CD8-positive, alpha-beta T cell (primary cell): ENCODE measurements at regions of chr7 and their contacts with region 1.

Region 1: GRCh38 chr7:24896031-24896501 is 83.9 kb downstream of the OSBPL3 start:
- DNase-seq: peak in 2 of 9 experiments; percentile 37 to 54
- ATAC-seq: peak; percentile 56
- H3K4me3 ChIP-seq: no peak overlapping the region
- H3K4me3 Mint-ChIP-seq: no peak overlapping the region
- H3K27ac ChIP-seq: peak overlapping the region in 1 of 2 experiments; percentile 34
- H3K27ac Mint-ChIP-seq: peak overlapping the region; percentile 45
- H3K4me1 ChIP-seq: peaks cover 13% of the 10 kb centered on the region
- H3K4me1 Mint-ChIP-seq: peaks cover 45% of the 10 kb centered on the region
- H3K27me3 ChIP-seq: no peaks in the 10 kb centered on the region
- H3K27me3 Mint-ChIP-seq: no peaks in the 10 kb centered on the region
- CTCF ChIP-seq: no peak

Region 2: GRCh38 chr7:24158975-24159374 is 737.1 kb before region 1 on chr7:
- CTCF ChIA-PET with region 1: no interaction called
- POLR2A ChIA-PET with region 1: no interaction called
- intact Hi-C with region 1: no loop called
- DNase-seq: no peak
- ATAC-seq: no peak
- H3K4me3 ChIP-seq: no peak overlapping the region
- H3K4me3 Mint-ChIP-seq: no peak overlapping the region
- H3K27ac ChIP-seq: no peak overlapping the region
- H3K27ac Mint-ChIP-seq: no peak overlapping the region
- H3K4me1 ChIP-seq: no peaks in the 10 kb centered on the region
- H3K4me1 Mint-ChIP-seq: no peaks in the 10 kb centered on the region
- H3K27me3 ChIP-seq: no peaks in the 10 kb centered on the region
- H3K27me3 Mint-ChIP-seq: peaks cover 28% of the 10 kb centered on the region
- CTCF ChIP-seq: no peak

Region 3: DNA sequence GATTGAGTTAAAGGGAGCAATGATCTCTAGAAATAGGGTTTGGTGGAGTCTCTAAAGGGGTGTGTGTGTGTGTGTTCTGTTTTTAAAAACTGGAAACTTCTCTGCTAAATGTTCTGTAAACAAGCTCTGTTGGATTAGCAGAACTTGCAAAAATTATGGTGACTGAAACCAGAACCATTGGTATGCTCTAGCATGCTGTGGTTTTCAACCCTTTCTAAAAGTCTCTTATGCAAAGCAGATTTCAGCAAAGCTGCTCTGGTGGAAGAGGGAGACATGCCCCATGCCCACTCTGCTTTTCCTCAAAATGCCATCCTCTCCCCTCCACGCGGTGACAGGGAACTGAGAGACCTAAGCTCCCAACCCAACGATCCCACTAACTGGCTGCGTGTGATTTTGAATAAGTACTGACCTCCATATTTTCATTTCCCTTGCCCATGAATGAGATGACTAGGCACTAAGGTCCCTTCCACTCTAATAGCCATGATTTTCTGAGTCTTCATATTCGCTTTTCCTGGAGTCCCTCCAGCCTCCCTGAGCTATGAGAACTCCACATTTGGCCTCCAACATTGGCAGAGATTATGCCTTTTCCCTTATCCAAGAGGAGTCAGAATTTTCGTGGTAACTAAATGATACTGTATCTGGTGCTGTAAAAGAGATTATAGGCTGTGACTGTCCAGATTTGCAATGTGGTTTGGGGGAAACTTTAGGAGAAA is 440.1 kb before region 1 on chr7:
- CTCF ChIA-PET with region 1: no interaction called
- POLR2A ChIA-PET with region 1: no interaction called
- intact Hi-C with region 1: no loop called
- DNase-seq: no peak
- ATAC-seq: no peak
- H3K4me3 ChIP-seq: no peak overlapping the region
- H3K4me3 Mint-ChIP-seq: no peak overlapping the region
- H3K27ac ChIP-seq: no peak overlapping the region
- H3K27ac Mint-ChIP-seq: no peak overlapping the region
- H3K4me1 ChIP-seq: no peaks in the 10 kb centered on the region
- H3K4me1 Mint-ChIP-seq: no peaks in the 10 kb centered on the region
- H3K27me3 ChIP-seq: no peaks in the 10 kb centered on the region
- H3K27me3 Mint-ChIP-seq: peaks cover 13% of the 10 kb centered on the region
- CTCF ChIP-seq: no peak

Region 4: DNA sequence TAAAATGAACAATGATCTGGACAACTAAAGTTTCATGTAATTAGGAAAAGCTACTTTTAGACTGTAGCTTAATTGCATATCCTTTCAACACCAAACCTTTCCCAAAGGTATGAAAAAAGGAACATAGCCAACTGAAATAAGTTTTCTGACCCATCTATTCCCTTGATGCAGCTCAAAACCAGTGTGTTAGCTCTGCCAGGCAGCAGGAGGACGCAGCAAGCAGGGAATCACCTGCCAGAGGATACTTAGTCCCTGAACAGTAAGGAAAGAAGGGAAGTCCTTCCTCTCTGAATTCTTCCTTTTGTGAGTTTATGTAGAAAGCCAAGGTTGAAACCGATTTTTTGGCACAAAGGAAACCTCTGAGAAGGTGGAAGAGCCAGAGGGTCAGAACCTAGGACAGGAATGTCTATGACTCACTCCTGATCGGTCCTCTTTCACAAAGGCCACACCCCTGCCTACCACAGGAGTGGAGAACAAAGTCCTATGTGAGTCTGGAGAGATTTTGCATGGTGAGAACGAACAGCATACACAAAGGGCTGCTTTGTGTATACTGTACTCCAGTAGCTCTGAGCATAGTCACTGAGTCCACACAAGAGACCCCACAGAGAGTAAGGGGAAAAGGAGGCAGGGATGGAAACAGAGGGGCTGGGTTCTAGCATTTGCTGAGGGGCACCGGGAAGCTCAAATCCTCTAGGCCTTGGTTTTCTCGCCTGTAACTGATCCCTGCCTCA is 70.0 kb before region 1 on chr7:
- CTCF ChIA-PET with region 1: interaction called, 8 read pairs
- POLR2A ChIA-PET with region 1: no interaction called
- intact Hi-C with region 1: loop called in 1 of 2 experiments (anchors 5 kb)
- DNase-seq: peak in 4 of 9 experiments; percentile 8 to 36 (median 18)
- ATAC-seq: peak; percentile 1
- H3K4me3 ChIP-seq: peak overlapping the region in 1 of 2 experiments; percentile 3
- H3K4me3 Mint-ChIP-seq: peak overlapping the region; percentile 9
- H3K27ac ChIP-seq: peak overlapping the region in 1 of 2 experiments; percentile 27
- H3K27ac Mint-ChIP-seq: peak overlapping the region; percentile 94
- H3K4me1 ChIP-seq: peaks cover 39% of the 10 kb centered on the region
- H3K4me1 Mint-ChIP-seq: peaks cover 46% of the 10 kb centered on the region
- H3K27me3 ChIP-seq: no peaks in the 10 kb centered on the region
- H3K27me3 Mint-ChIP-seq: no peaks in the 10 kb centered on the region
- CTCF ChIP-seq: no peak

Region 5: DNA sequence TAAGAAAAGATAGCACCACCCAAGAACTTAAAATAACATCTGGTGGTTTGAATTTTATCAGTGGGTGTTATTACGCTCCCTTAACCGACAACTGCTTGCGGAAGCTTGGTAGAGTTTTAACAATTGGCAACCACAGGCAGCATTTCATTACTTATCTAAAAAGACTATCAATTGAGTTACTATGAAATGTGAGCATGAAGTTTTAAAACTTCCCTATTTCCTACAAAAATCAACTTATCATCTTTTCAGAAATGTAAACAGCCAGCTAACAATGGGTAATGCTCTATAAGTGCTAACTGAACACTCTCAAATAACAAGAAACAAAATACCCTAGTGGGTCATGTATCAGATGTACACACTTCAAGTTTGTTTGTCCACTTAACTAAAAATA is 15.1 kb after region 1 on chr7:
- CTCF ChIA-PET with region 1: interaction called, 4 read pairs
- POLR2A ChIA-PET with region 1: interaction called, 5 read pairs
- intact Hi-C with region 1: loop called in 1 of 2 experiments (anchors 2 kb)
- DNase-seq: peak in 4 of 9 experiments; percentile 32 to 75 (median 48)
- ATAC-seq: peak; percentile 65
- H3K4me3 ChIP-seq: no peak overlapping the region
- H3K4me3 Mint-ChIP-seq: peak overlapping the region; percentile 27
- H3K27ac ChIP-seq: peak overlapping the region in 1 of 2 experiments; percentile 70
- H3K27ac Mint-ChIP-seq: peak overlapping the region; percentile 76
- H3K4me1 ChIP-seq: peaks cover 68% of the 10 kb centered on the region
- H3K4me1 Mint-ChIP-seq: peaks cover 54% of the 10 kb centered on the region
- H3K27me3 ChIP-seq: no peaks in the 10 kb centered on the region
- H3K27me3 Mint-ChIP-seq: no peaks in the 10 kb centered on the region
- CTCF ChIP-seq: no peak

Region 6: GRCh38 chr7:24921362-24921679 is 25.3 kb after region 1 on chr7:
- CTCF ChIA-PET with region 1: no interaction called
- POLR2A ChIA-PET with region 1: no interaction called
- intact Hi-C with region 1: no loop called
- DNase-seq: no peak
- ATAC-seq: no peak
- H3K4me3 ChIP-seq: no peak overlapping the region
- H3K4me3 Mint-ChIP-seq: no peak overlapping the region
- H3K27ac ChIP-seq: peak overlapping the region in 1 of 2 experiments; percentile 38
- H3K27ac Mint-ChIP-seq: peak overlapping the region; percentile 19
- H3K4me1 ChIP-seq: peaks cover 15% of the 10 kb centered on the region
- H3K4me1 Mint-ChIP-seq: peaks cover 54% of the 10 kb centered on the region
- H3K27me3 ChIP-seq: no peaks in the 10 kb centered on the region
- H3K27me3 Mint-ChIP-seq: no peaks in the 10 kb centered on the region
- CTCF ChIP-seq: no peak

Region 7: DNA sequence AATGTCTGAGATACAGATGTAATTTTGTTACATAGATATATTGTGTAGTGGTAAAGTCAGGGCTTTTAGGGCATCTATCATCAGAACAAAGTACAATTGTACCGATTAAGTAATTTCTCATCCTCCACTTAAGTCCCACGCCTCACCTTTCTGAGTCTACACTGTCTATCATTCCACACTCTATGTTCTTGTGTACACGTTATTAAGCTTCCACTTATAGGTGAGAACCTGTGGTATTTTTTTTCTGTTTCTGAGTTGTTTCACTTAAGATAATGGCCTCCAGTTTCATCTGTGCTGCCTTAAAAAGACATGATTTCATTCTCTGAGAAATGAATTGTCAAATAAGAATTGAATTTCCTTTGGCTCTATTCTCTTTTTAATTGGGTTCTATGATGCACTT is 99.4 kb after region 1 on chr7:
- CTCF ChIA-PET with region 1: no interaction called
- POLR2A ChIA-PET with region 1: no interaction called
- intact Hi-C with region 1: no loop called
- DNase-seq: no peak
- ATAC-seq: no peak
- H3K4me3 ChIP-seq: no peak overlapping the region
- H3K4me3 Mint-ChIP-seq: no peak overlapping the region
- H3K27ac ChIP-seq: no peak overlapping the region
- H3K27ac Mint-ChIP-seq: no peak overlapping the region
- H3K4me1 ChIP-seq: no peaks in the 10 kb centered on the region
- H3K4me1 Mint-ChIP-seq: no peaks in the 10 kb centered on the region
- H3K27me3 ChIP-seq: no peaks in the 10 kb centered on the region
- H3K27me3 Mint-ChIP-seq: no peaks in the 10 kb centered on the region
- CTCF ChIP-seq: no peak